ENCODE measurements at regions of chr1 and their contacts with region 1.

Region 1: GRCh38 chr1:52424231-52424636 is 19.8 kb downstream of the PRPF38A start:
- DNase-seq: peak; percentile 41
- H3K4me3 Mint-ChIP-seq: peak overlapping the region; percentile 59
- H3K27ac Mint-ChIP-seq: peak overlapping the region; percentile 97
- H3K4me1 Mint-ChIP-seq: peaks cover 43% of the 10 kb centered on the region
- H3K27me3 Mint-ChIP-seq: no peaks in the 10 kb centered on the region

Region 2: DNA sequence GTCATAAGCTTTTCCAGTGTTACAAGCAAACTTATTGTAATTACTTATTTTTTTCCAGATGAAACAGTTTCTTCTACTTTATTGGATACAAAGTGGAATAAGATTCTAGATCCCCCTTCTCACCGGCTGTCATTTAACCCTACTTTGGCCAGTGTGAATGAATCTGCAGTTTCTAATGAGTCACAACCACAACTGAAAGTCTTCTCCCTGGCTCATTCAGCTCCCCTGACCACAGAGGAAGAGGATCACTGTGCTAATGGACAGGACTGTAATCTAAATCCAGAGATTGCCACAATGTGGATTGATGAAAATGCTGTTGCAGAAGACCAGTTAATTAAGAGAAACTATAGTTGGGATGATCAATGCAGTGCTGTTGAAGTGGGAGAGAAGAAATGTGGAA is 186.8 kb before region 1 on chr1:
- CTCF ChIA-PET with region 1: no interaction called
- POLR2A ChIA-PET with region 1: no interaction called
- DNase-seq: no peak
- H3K4me3 Mint-ChIP-seq: no peak overlapping the region
- H3K27ac Mint-ChIP-seq: no peak overlapping the region
- H3K4me1 Mint-ChIP-seq: no peaks in the 10 kb centered on the region
- H3K27me3 Mint-ChIP-seq: no peaks in the 10 kb centered on the region

Region 3: DNA sequence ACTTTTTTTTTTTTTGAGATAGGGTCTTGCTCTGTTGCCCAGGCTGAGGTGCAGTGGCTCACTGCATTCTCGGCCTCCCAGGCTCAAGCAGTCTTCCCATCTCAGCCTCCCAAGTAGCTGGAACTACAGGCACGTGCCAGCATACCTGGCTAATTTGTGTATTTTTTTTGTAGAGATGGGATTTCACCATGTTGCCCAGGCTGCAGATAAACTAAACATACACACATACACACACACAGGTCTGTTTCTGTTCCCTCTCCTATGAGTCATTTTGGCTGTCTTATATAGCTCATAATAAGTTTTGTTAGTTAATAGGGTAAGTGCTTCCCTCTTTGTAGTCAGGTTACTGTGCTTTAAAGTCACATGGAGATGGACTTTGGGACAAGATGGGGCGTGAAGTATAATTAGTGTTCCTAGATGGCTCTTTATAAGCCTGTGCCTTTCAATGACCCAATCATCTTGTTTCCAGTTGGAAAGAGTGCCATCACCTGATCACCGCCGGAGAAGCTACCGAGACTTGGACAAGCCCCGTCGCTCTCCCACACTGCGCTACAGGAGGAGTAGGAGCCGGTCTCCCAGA is 10.7 kb before region 1 on chr1:
- CTCF ChIA-PET with region 1: no interaction called
- POLR2A ChIA-PET with region 1: interaction called, 18 read pairs
- DNase-seq: no peak
- H3K4me3 Mint-ChIP-seq: no peak overlapping the region
- H3K27ac Mint-ChIP-seq: no peak overlapping the region
- H3K4me1 Mint-ChIP-seq: peaks cover 9% of the 10 kb centered on the region
- H3K27me3 Mint-ChIP-seq: no peaks in the 10 kb centered on the region

Region 4: DNA sequence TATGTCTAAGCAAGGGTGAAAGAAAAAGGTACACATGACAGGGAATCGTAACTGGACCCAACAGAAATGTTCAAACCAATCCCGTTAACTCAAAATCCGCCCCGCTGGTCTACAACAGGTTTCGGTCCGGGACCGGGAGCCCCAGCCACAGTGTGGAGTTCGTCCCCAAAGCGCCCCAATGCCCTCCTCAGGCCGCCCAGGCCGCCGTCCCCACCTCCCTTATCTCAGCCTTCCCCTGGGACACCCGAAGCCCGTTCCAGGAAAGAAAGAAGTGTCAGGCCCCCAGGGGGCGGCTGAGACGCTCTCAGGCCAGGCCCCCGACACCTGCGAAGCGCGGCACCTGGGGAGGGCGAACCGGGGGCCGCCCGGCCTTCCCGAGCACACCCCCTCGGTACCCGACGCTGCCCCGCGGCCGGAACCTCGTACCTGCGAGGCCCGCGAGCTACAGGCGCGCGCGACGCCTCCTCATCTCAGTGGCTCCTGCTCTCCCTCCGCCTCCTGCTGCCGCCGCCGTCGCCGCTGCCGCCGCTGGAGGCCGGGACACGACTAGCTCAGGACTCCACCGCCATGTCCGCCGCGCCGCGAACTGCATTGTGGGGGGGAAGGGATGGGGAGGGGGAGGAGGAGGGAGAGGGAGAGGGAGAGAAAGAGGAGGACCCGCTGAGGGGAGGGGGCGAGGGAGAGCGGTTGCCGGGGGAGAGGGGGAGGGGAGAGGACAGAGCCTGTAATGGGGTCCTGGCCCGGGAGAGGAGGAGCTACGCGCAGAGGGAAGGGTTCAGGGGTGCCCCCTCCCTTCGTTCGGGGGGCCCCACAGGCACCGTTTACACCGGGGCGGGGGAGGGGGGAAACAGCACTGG is 128.5 kb after region 1 on chr1 and contains the start of gene TUT4:
- CTCF ChIA-PET with region 1: no interaction called
- POLR2A ChIA-PET with region 1: interaction called, 17 read pairs
- DNase-seq: peak; percentile 81
- H3K4me3 Mint-ChIP-seq: no peak within 1 kb of the TSS
- H3K27ac Mint-ChIP-seq: peak within 1 kb of the TSS; percentile 3
- H3K4me1 Mint-ChIP-seq: peaks cover 21% of the 10 kb centered on the region
- H3K27me3 Mint-ChIP-seq: no peaks in the 10 kb centered on the region
- total RNA-seq, gene TUT4: 68.1 to 71.8 TPM

Region 5: GRCh38 chr1:52636721-52637695 is 212.8 kb after region 1 on chr1:
- CTCF ChIA-PET with region 1: no interaction called
- POLR2A ChIA-PET with region 1: interaction called, 17 read pairs
- DNase-seq: peak; percentile 78
- H3K4me3 Mint-ChIP-seq: peak overlapping the region; percentile 59
- H3K27ac Mint-ChIP-seq: peak overlapping the region; percentile 98
- H3K4me1 Mint-ChIP-seq: peaks cover 70% of the 10 kb centered on the region
- H3K27me3 Mint-ChIP-seq: peaks cover 10% of the 10 kb centered on the region

Measured in activated CD4-positive, alpha-beta memory T cell treated with anti-CD3 and anti-CD28 coated beads, Interleukin-2, amount 10 ng/mL, durations not matched to agents 7 days and 5 days (primary cell).